GM10248 (cell line): ENCODE measurements at regions of chr11 and their contacts with region 1.

Region 1: GRCh38 chr11:6315811-6316425 is 4.4 kb downstream of the CAVIN3 start:
- DNase-seq: peak; percentile 68
- CTCF ChIP-seq: peak; percentile 75

Region 2: GRCh38 chr11:6269994-6270393 is 45.9 kb before region 1 on chr11:
- CTCF ChIA-PET with region 1: no interaction called
- POLR2A ChIA-PET with region 1: no interaction called
- DNase-seq: no peak
- CTCF ChIP-seq: no peak

Region 3: DNA sequence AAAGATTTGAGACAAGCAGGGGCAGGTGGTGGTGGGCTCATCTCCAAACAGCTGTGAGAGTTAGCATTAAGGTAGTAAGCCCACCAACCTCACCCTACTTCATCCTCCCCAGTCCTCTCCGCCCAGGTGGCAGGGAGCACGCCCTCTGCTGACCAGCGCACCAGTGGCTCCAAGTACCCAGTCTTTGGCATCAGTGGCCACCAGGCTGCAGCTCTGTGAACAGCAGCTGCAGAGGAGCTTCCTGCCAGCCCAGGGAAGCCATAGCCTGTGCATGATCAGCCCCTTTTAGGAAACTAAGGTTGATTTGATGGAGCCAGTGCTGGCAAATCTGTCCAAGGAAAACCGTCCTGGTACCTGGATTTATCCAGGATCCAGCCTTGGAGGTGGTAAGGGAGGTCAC is 17.3 kb before region 1 on chr11:
- CTCF ChIA-PET with region 1: interaction called, 14 read pairs
- POLR2A ChIA-PET with region 1: interaction called, 3 read pairs
- DNase-seq: no peak
- CTCF ChIP-seq: peak; percentile 41

Region 4: GRCh38 chr11:6333112-6333511 is 17.2 kb after region 1 on chr11:
- CTCF ChIA-PET with region 1: interaction called, 24 read pairs
- POLR2A ChIA-PET with region 1: no interaction called
- DNase-seq: no peak
- CTCF ChIP-seq: no peak

Region 5: GRCh38 chr11:6353367-6353987 is 37.6 kb after region 1 on chr11:
- CTCF ChIA-PET with region 1: interaction called, 10 read pairs
- POLR2A ChIA-PET with region 1: no interaction called
- DNase-seq: peak; percentile 67
- CTCF ChIP-seq: peak; percentile 95